ENCODE measurements at regions of chr1 and their contacts with region 1.

Region 1: DNA sequence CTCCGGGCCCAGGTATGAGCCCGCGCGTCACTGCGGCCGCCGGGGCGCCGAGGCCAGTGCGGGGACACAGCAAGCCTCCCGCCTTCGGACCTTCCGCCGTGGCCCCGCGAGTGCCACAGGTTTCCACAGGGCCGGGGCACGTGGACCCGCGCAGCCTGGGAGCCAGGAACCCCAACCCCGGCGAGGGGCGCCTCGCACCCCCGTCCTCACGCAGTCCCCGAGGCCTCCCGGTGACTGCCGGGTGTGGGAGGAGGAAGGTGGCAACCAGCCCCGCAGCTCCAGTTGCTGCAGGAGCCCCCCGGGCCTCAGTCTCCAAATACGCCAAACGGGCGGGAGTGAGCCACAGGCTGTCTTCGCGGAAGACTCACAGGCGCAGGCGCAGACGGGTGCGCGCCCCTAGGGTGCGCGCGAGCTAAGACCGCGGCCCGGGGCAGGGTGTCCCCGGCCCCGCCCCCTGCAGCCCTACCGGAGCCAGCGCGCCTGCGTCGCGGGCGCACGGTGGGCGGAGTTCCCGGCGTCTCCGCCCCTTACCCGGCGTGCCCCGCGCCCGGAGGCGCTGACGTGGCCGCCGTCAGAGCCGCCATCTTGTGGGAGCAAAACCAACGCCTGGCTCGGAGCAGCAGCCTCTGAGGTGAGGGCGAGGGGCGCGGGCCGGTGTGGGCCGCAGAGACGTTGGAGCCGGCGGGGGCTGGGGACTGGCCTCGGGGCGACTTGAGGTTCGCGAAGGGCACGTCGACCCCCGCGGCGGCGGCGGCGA is at the start of gene ARF1:
- DNase-seq: peak; percentile 90 to 91
- H3K4me3 ChIP-seq: peak within 1 kb of the TSS; percentile 97 to 100 (median 100)
- H3K27ac ChIP-seq: peak within 1 kb of the TSS; percentile 98 to 99 (median 99)
- H3K4me1 ChIP-seq: peaks cover 43 to 52% of the 10 kb centered on the region in 2 donors
- H3K27me3 ChIP-seq: no peaks in the 10 kb centered on the region
- CTCF ChIP-seq: peak in 1 of 6 experiments; percentile 18
- POLR2A ChIP-seq: peak; percentile 85 to 95
- total RNA-seq, gene ARF1: 378 to 457 (median 410) TPM

Region 2: DNA sequence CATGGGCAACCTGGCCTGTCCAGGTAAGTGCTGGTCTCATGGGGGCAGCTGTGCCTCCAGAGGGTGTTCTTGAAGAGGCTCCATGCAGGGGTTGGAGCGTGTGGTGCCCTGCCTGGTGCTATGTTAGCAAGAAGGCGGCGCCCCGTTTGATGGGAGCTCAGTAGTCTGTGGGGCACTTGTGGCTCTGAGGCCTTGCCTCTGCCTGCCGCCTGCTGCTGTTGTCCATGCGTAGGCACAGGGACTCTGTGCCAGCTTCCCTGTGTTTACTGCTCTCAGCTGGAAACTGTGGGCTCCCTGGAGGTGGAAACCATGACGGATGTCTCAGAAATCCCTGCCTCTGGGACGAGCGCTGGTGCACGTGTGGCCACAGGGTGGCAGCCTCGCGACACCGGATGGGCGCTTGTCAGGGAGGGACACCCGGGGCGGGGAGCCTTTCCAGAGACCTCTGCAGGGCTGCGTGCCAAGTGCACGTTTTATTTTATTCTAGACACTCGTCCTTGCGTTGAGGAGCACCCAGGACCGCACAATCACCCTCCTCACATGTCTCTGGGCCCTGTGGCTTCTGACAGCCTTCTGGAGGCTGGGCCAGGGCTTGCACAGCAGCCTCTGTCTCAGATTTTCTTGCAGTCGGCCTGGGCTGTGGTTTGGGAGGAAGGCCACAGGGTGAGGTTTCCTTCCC is 319.9 kb before region 1 on chr1:
- intact Hi-C with region 1: no loop called
- DNase-seq: peak; percentile 89 to 91
- H3K4me3 ChIP-seq: no peak overlapping the region
- H3K27ac ChIP-seq: no peak overlapping the region
- H3K4me1 ChIP-seq: peaks cover 8 to 17% of the 10 kb centered on the region in 2 donors
- H3K27me3 ChIP-seq: no peaks in the 10 kb centered on the region
- CTCF ChIP-seq: peak; percentile 75 to 93 (median 88)
- POLR2A ChIP-seq: no peak

Region 3: DNA sequence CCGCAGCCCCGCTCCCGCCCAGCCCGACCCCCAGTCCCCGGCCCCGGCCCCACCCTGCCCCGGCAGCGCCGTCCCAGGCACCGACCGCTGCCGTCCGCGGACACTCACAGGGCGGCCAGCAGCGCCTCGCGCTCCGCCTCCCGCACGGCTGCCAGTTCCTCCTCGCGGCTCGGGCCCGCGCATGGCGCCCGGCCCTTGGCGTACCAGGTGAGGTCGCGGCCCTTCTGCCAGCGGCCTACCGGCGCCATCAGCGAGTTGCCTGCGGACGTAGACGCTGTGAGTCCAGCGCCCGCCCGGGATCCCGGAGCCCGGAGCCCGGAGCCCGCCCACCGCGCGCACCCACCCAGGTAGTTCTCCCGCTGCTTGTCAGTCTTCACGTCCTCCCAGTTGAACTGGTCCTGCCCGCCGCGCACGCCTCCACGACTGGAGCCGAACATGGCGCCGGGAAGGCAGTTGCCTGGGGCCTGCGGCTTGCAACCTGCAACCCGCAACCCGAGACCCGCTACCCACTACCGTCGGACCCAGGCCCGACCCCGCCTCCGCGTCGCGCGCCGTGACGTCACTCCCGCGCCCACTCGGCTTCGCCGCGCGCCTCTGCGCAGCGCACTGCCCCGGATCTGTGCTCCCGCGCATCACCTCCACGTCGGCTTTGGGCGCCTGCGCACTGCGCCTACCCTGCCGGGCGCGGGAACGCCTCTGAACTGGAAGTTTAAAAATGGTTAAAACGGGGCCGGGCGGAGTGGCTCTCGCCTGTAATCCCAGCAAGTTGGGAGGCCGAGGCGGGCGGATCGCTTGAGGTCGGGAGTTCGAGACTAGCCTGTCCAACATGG is 20.7 kb after region 1 on chr1 and contains the start of gene C1orf35:
- intact Hi-C with region 1: loop called (anchors 2 kb)
- DNase-seq: peak; percentile 91 to 95
- H3K4me3 ChIP-seq: peak within 1 kb of the TSS; percentile 75 to 93 (median 87)
- H3K27ac ChIP-seq: peak within 1 kb of the TSS; percentile 81 to 91 (median 87)
- H3K4me1 ChIP-seq: peaks cover 17 to 19% of the 10 kb centered on the region in 2 donors
- H3K27me3 ChIP-seq: no peaks in the 10 kb centered on the region
- CTCF ChIP-seq: no peak
- POLR2A ChIP-seq: peak; percentile 56 to 83
- total RNA-seq, gene C1orf35: 8.3 to 26.5 (median 13.6) TPM

Measured in thyroid gland (tissue), 4 donors.